T-cell (primary cell): ENCODE measurements at regions of chr4 and their contacts with region 1.

Region 1: GRCh38 chr4:25312496-25313200 is at the start of gene ZCCHC4:
- DNase-seq: peak; percentile 70 to 96 (median 87)
- ATAC-seq: peak; percentile 97 to 100 (median 98)
- H3K4me3 ChIP-seq: peak within 1 kb of the TSS; percentile 94
- H3K4me3 Mint-ChIP-seq: peak within 1 kb of the TSS; percentile 97 to 98 (median 97)
- H3K27ac ChIP-seq: peak within 1 kb of the TSS; percentile 74
- H3K27ac Mint-ChIP-seq: peak within 1 kb of the TSS; percentile 93 to 94
- H3K4me1 ChIP-seq: peaks cover 9 to 10% of the 10 kb centered on the region in 2 experiments
- H3K4me1 Mint-ChIP-seq: peaks cover 12 to 30% (median 27%) of the 10 kb centered on the region in 3 donors
- H3K27me3 ChIP-seq: peaks cover 0 to 8% of the 10 kb centered on the region in 2 experiments
- H3K27me3 Mint-ChIP-seq: peaks cover 9 to 10% of the 10 kb centered on the region in 2 donors
- total RNA-seq, gene ZCCHC4: 10.6 to 12.9 (median 12.0) TPM

Region 2: DNA sequence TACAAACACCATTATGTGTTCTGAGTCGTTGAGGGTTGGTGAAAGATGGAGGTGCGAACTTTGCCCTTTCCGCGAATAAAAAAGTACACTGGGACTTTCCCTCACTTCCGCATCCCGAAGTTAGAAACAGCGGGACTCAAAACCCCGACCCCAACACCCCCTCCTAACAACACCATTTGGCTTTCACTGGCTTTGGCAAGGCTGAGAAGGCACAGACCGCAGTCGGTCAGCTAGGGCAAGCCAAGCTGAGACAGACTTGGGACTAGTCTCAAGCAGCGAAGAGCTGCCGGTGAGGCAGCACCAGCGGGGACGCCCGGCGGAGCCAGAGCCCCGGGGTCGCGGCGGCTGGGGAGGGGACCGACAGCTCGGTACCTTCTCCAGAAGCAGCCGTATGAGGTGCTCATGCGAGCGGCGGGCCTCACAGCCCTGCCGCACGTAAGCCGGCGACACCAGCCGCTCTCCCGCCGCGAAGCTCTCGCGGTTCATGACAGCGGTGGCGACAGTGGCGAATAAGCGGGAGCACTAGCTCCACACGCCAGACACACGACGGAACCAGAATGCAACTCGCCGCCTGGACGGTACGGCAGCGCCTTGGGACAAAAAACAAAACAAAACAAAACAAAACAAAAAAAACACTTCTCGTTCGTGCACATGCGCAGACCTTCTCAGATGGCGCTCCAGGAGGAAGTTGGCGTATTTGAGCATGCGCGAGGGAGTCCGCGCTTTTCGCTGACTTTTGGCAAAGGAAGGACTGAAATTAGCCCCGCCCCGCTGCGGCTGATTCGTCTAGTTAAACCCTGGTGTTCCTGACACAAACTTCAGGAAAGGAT is 152.5 kb before region 1 on chr4 and contains the start of gene SEPSECS:
- CTCF ChIA-PET with region 1: interaction called in 1 of 2 experiments, 41 read pairs
- POLR2A ChIA-PET with region 1: interaction called in 1 of 2 experiments, 6 read pairs
- DNase-seq: peak; percentile 78 to 98 (median 91)
- ATAC-seq: peak; percentile 80 to 86 (median 81)
- H3K4me3 ChIP-seq: peak within 1 kb of the TSS; percentile 91 to 95
- H3K4me3 Mint-ChIP-seq: peak within 1 kb of the TSS; percentile 88 to 93 (median 93)
- H3K27ac ChIP-seq: peak within 1 kb of the TSS; percentile 98
- H3K27ac Mint-ChIP-seq: peak within 1 kb of the TSS; percentile 97 to 98
- H3K4me1 ChIP-seq: peaks cover 13 to 24% of the 10 kb centered on the region in 2 experiments
- H3K4me1 Mint-ChIP-seq: peaks cover 49 to 66% (median 60%) of the 10 kb centered on the region in 3 donors
- H3K27me3 ChIP-seq: no peaks in the 10 kb centered on the region
- H3K27me3 Mint-ChIP-seq: no peaks in the 10 kb centered on the region
- total RNA-seq, gene SEPSECS: 12.4 to 16.2 (median 15.0) TPM

Region 3: GRCh38 chr4:25180524-25181131 is 132.0 kb before region 1 on chr4:
- CTCF ChIA-PET with region 1: interaction called, 3 to 15 read pairs
- POLR2A ChIA-PET with region 1: no interaction called
- DNase-seq: peak in 20 of 35 experiments; percentile 6 to 68 (median 22)
- ATAC-seq: peak in 3 of 4 experiments; percentile 46 to 64 (median 61)
- H3K4me3 ChIP-seq: no peak overlapping the region
- H3K4me3 Mint-ChIP-seq: no peak overlapping the region
- H3K27ac ChIP-seq: no peak overlapping the region
- H3K27ac Mint-ChIP-seq: no peak overlapping the region
- H3K4me1 ChIP-seq: peaks cover 8 to 10% of the 10 kb centered on the region in 2 experiments
- H3K4me1 Mint-ChIP-seq: peaks cover 26 to 51% (median 40%) of the 10 kb centered on the region in 3 donors
- H3K27me3 ChIP-seq: no peaks in the 10 kb centered on the region
- H3K27me3 Mint-ChIP-seq: no peaks in the 10 kb centered on the region

Region 4: DNA sequence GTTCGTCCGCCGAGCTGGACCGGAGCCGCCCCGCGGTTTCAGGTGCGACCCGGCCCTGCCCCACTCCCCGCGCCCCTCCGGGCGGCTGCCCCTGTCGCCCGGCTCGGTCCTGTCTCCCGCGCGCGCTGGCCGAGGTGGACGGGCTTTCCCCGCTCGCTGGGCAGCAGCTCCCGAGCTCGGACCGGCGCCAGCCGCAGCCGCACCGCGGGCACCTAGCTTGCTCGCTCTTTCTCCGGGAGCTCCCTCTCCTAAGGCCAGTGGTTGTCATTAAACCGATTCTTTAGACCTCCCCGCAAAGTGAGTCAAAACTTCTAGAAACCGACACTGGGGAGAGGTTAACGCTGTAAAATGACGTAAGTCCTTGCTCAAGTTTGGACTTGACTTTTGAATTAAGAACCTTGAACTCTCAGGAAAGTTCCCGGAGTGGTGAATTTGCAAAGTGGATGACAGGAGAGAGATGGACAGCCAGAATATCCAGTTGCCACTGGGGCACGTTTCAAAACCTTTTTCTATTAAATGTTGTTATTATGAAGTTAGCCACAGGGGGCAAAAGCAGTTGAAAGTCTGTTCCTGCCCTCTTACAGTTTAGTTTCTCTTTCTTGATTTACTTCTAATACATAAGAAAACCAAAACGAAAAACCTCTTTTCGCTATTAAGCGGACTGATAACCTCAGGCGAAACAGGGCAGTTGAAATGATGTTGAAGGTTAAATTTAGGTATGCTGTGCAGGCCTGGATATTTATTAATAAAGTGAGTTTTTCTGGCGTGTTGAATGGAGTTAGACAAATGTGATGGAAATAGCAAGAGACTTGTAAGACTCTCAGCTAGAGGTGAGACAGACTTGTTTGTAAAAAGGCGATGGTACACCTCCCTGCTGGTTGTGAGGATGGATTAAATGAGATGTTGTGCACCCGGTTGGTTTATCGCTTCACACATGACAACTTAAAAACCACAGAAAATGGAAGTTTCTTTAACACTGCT is 78.0 kb before region 1 on chr4:
- CTCF ChIA-PET with region 1: interaction called, 7 to 59 read pairs
- POLR2A ChIA-PET with region 1: interaction called, 3 to 7 read pairs
- DNase-seq: peak in 31 of 35 experiments; percentile 6 to 81 (median 21)
- ATAC-seq: peak; percentile 39 to 49 (median 42)
- H3K4me3 ChIP-seq: peak overlapping the region; percentile 91 to 93
- H3K4me3 Mint-ChIP-seq: peak overlapping the region; percentile 85 to 95 (median 90)
- H3K27ac ChIP-seq: peak overlapping the region; percentile 88
- H3K27ac Mint-ChIP-seq: peak overlapping the region; percentile 94 to 98
- H3K4me1 ChIP-seq: peaks cover 11 to 26% of the 10 kb centered on the region in 2 experiments
- H3K4me1 Mint-ChIP-seq: peaks cover 44 to 52% (median 46%) of the 10 kb centered on the region in 3 donors
- H3K27me3 ChIP-seq: no peaks in the 10 kb centered on the region
- H3K27me3 Mint-ChIP-seq: no peaks in the 10 kb centered on the region

Region 5: DNA sequence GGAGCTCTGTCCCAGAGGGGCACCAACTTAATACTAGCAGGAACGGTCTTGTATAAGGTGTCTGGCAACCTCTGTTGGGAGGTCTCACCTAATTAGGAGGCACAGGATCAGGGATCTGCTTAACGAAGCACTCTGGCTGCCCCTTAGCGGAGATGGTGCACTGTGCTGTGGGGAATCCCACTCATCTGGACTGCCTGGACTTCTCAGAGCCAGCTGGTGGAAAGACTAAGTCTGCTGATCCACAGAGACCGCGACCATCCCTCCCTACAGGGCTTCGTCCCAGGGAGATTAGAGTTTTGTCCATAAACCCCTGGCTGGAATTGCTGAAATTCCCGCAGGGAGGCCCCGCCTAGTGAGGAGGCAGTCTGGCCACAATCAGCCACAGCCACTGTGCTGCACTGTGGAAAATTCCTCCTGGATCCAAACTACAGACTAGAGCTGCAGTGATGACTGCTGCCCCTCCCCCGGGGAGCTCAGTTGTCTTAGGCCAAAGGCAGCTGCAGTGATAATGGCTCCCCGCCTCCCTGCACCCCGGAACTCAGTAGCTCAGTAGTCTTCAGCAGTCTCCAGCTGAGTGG is 22.1 kb before region 1 on chr4:
- CTCF ChIA-PET with region 1: interaction called in 1 of 2 experiments, 3 read pairs
- POLR2A ChIA-PET with region 1: interaction called in 1 of 2 experiments, 13 read pairs
- DNase-seq: no peak
- ATAC-seq: no peak
- H3K4me3 ChIP-seq: no peak overlapping the region
- H3K4me3 Mint-ChIP-seq: no peak overlapping the region
- H3K27ac ChIP-seq: no peak overlapping the region
- H3K27ac Mint-ChIP-seq: no peak overlapping the region
- H3K4me1 ChIP-seq: no peaks in the 10 kb centered on the region
- H3K4me1 Mint-ChIP-seq: no peaks in the 10 kb centered on the region
- H3K27me3 ChIP-seq: peaks cover 0 to 2% of the 10 kb centered on the region in 2 experiments
- H3K27me3 Mint-ChIP-seq: peaks cover 4 to 7% of the 10 kb centered on the region in 2 donors

Region 6: GRCh38 chr4:25330905-25331808 is 18.5 kb after region 1 on chr4:
- CTCF ChIA-PET with region 1: interaction called, 10 to 20 read pairs
- POLR2A ChIA-PET with region 1: interaction called, 4 to 6 read pairs
- DNase-seq: peak in 1 of 35 experiments; percentile 29
- ATAC-seq: peak; percentile 47 to 62 (median 49)
- H3K4me3 ChIP-seq: peak overlapping the region in 1 of 2 donors; percentile 45
- H3K4me3 Mint-ChIP-seq: peak overlapping the region; percentile 76 to 86 (median 77)
- H3K27ac ChIP-seq: peak overlapping the region; percentile 84
- H3K27ac Mint-ChIP-seq: peak overlapping the region; percentile 93
- H3K4me1 ChIP-seq: peaks cover 0 to 14% of the 10 kb centered on the region in 2 experiments
- H3K4me1 Mint-ChIP-seq: peaks cover 19 to 20% (median 20%) of the 10 kb centered on the region in 3 donors
- H3K27me3 ChIP-seq: no peaks in the 10 kb centered on the region
- H3K27me3 Mint-ChIP-seq: no peaks in the 10 kb centered on the region

Region 7: GRCh38 chr4:25367004-25367621 is 54.5 kb after region 1 on chr4:
- CTCF ChIA-PET with region 1: interaction called, 7 to 25 read pairs
- POLR2A ChIA-PET with region 1: interaction called in 1 of 2 experiments, 3 read pairs
- DNase-seq: peak in 1 of 35 experiments; percentile 64
- ATAC-seq: no peak
- H3K4me3 ChIP-seq: no peak overlapping the region
- H3K4me3 Mint-ChIP-seq: no peak overlapping the region
- H3K27ac ChIP-seq: no peak overlapping the region
- H3K27ac Mint-ChIP-seq: no peak overlapping the region
- H3K4me1 ChIP-seq: no peaks in the 10 kb centered on the region
- H3K4me1 Mint-ChIP-seq: no peaks in the 10 kb centered on the region
- H3K27me3 ChIP-seq: no peaks in the 10 kb centered on the region
- H3K27me3 Mint-ChIP-seq: no peaks in the 10 kb centered on the region

Region 8: DNA sequence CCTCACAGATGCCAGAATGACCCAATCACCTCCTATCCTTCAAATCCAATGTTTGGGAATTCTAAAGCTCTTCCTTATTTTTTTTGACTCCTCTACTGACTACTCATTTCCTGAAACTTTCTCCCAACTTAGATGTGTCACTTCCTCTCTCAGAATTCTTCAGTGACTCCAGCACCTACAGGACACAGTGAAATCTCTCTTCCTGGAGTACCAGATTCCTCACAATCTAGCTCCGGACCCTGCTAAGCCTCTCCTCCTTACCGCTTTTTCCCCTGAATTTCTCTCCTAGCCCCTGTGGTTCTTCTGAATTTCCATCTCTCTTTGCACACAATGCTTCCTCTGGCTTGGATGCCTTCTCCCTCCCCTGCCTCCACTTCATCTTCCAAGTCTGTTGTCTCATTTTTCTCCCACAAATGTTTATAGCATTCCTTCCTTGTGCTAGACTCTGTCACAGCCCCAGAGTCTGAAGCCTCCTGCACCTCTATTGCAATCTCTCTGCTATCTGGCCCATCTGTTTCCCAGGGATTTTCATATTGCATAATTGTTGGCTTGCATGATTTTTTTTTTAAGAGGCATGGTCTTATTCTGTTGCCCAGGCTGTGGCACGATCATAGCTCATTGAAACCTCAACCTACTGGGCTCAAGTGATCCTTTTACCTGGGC is 144.5 kb after region 1 on chr4:
- CTCF ChIA-PET with region 1: no interaction called
- POLR2A ChIA-PET with region 1: no interaction called
- DNase-seq: no peak
- ATAC-seq: no peak
- H3K4me3 ChIP-seq: no peak overlapping the region
- H3K4me3 Mint-ChIP-seq: no peak overlapping the region
- H3K27ac ChIP-seq: no peak overlapping the region
- H3K27ac Mint-ChIP-seq: no peak overlapping the region
- H3K4me1 ChIP-seq: no peaks in the 10 kb centered on the region
- H3K4me1 Mint-ChIP-seq: no peaks in the 10 kb centered on the region
- H3K27me3 ChIP-seq: no peaks in the 10 kb centered on the region
- H3K27me3 Mint-ChIP-seq: no peaks in the 10 kb centered on the region